Endothelial cell of umbilical vein (primary cell): ENCODE measurements at regions of chr10 and their contacts with region 1.

Region 1: DNA sequence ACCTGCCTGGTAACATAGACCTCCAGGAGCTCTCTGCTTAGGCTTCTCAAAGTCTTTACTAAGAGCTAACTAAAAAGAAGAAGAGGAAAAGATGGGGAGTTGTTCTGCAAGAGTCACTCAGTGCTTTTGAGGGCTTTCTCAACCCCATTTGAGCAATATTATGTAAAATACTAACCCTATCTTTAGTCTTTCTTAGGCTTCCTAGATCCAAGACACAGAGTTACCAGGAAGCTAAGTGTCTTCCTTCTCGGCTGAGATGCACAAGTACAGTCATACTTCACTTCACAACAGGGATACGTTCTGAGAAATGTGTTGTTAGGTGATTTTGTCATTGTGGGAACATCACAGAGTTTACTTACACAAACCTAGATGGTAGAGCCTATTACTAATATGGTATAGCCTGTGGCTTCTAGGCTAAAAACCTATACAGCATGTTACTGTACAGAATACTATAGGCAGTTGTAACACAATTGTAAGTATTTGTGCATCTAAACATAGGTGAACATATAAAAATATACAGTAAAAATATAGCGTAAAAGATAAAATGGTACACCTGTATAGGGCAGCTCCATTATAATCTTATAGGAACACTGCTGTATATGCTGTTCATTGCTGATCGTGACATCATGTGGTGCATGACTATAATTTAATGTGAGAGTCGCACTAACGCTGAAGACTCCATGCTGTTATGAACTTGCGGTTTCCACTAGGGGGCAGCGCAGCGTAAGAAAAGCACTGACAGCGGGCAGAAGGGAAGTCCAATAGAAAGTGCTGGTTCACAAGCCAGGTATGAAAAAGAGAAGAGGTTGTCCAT is 16.3 kb downstream of the ANKRD22 start:
- DNase-seq: peak; percentile 85
- H3K4me3 ChIP-seq: no peak overlapping the region
- H3K27ac ChIP-seq: no peak overlapping the region
- H3K4me1 ChIP-seq: no peaks in the 10 kb centered on the region
- H3K27me3 ChIP-seq: peaks cover 0 to 2% of the 10 kb centered on the region in 2 experiments
- CTCF ChIP-seq: peak; percentile 83 to 88
- POLR2A ChIP-seq: no peak

Region 2: DNA sequence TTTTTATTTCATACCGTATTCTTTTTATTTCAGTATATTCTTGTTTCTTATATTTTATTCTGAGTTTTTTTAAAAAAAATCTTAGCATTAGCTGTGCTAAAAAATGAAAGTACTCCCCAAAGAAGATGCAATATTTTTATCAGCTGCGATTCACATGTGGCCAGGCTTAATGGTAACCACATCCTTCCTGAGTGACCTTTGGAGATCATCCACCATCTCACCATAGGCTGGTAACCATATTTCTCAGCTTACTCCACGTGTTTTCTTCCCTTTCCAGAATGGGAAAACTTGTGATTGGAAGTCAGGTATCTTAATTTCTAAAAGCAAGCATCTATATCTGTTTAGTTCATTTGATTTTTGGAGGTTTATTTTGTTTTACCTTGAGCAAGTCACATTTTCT is 51.6 kb before region 1 on chr10:
- CTCF ChIA-PET with region 1: no interaction called
- POLR2A ChIA-PET with region 1: no interaction called
- dilution Hi-C with region 1: no loop called
- intact Hi-C with region 1: no loop called
- DNase-seq: no peak
- H3K4me3 ChIP-seq: no peak overlapping the region
- H3K27ac ChIP-seq: no peak overlapping the region
- H3K4me1 ChIP-seq: peaks cover 4% of the 10 kb centered on the region
- H3K27me3 ChIP-seq: no peaks in the 10 kb centered on the region
- CTCF ChIP-seq: no peak
- POLR2A ChIP-seq: no peak

Region 3: GRCh38 chr10:88851706-88852105 is 16.4 kb after region 1 on chr10 and contains the start of gene ANKRD22:
- CTCF ChIA-PET with region 1: interaction called, 22 read pairs
- POLR2A ChIA-PET with region 1: no interaction called
- dilution Hi-C with region 1: no loop called
- intact Hi-C with region 1: no loop called
- DNase-seq: no peak
- H3K4me3 ChIP-seq: no peak within 1 kb of the TSS
- H3K27ac ChIP-seq: no peak within 1 kb of the TSS
- H3K4me1 ChIP-seq: peaks cover 7% of the 10 kb centered on the region
- H3K27me3 ChIP-seq: peaks cover 0 to 7% of the 10 kb centered on the region in 2 experiments
- CTCF ChIP-seq: no peak
- POLR2A ChIP-seq: no peak
- total RNA-seq, gene ANKRD22: not detected in 2 replicates

Region 4: DNA sequence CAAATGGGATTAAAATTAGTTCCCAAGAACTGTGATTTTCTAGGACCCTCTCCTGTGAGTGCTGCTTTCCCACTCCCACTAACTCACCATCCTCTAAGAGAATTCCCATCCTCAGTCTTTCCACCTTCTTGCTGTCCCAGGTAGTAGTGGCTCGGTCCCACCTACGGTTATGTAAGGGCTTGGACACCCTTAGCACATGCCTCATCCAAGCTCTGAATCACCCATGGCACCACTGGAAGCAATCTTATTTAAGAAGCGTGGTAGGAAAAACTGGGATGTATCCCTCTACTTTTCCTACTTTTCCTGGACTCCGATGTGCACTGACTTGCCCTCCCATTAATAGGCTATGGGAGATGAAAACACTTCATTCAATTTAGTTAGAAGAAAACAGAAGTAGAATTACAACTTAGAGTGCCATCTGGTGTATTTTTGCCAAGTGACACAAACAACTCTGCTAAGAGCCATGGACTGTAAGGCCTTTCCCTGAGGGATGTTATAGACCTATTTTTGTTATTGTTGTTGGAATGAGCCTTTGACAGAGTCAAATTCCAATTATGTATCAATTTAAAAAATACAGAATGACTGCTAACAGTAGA is 30.1 kb after region 1 on chr10:
- CTCF ChIA-PET with region 1: interaction called, 22 read pairs
- POLR2A ChIA-PET with region 1: no interaction called
- dilution Hi-C with region 1: no loop called
- intact Hi-C with region 1: no loop called
- DNase-seq: no peak
- H3K4me3 ChIP-seq: no peak overlapping the region
- H3K27ac ChIP-seq: no peak overlapping the region
- H3K4me1 ChIP-seq: no peaks in the 10 kb centered on the region
- H3K27me3 ChIP-seq: peaks cover 14 to 25% of the 10 kb centered on the region in 2 experiments
- CTCF ChIP-seq: no peak
- POLR2A ChIP-seq: no peak

Region 5: DNA sequence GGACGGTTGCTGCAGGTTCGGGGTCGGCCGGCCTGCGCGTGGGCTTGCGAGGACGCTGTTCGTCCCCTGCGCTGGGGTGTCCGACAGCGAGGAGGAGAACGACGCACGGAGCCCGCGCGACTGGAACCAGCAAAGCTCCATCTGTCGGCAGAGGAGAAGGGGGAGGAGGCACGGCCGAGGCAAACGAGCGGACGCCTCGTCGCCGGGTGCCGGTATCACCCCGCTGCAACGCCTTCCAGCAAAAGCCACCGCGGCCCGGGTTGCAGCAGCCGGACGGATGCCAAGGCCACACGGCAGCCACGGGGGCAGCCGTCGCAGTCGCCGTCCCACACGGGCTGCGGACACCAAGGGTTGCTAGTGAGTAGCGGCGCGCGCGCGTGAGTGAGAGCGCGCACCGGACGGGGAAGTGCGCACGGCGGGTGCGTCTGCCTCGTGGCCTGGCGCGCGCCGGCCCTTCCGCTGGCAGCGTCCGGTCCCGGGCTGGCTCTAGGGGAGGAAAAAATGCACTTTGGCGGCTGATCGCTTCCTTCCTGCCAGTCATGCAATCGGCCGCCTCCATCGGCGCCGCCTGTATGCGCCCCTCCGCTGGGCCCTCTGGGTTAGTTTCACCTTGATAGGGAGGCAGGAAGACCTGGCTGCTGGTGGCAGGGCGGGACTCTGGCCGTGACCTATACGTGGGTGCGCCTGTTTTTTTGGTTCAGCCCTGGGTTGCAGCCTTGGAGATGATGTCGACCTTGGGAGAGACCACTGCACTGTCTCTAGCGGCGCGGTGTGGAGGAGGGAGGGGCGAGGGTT is 45.2 kb after region 1 on chr10:
- CTCF ChIA-PET with region 1: interaction called, 21 read pairs
- POLR2A ChIA-PET with region 1: no interaction called
- dilution Hi-C with region 1: no loop called
- intact Hi-C with region 1: loop called (anchors 1 kb)
- DNase-seq: peak; percentile 82
- H3K4me3 ChIP-seq: peak overlapping the region; percentile 30 to 55 (median 55)
- H3K27ac ChIP-seq: peak overlapping the region; percentile 84
- H3K4me1 ChIP-seq: peaks cover 30% of the 10 kb centered on the region
- H3K27me3 ChIP-seq: no peaks in the 10 kb centered on the region
- CTCF ChIP-seq: peak; percentile 5 to 28
- POLR2A ChIP-seq: peak; percentile 83

Region 6: GRCh38 chr10:88901206-88901983 is 66.1 kb after region 1 on chr10:
- CTCF ChIA-PET with region 1: interaction called, 13 read pairs
- POLR2A ChIA-PET with region 1: no interaction called
- dilution Hi-C with region 1: no loop called
- intact Hi-C with region 1: no loop called
- DNase-seq: no peak
- H3K4me3 ChIP-seq: no peak overlapping the region
- H3K27ac ChIP-seq: no peak overlapping the region
- H3K4me1 ChIP-seq: no peaks in the 10 kb centered on the region
- H3K27me3 ChIP-seq: no peaks in the 10 kb centered on the region
- CTCF ChIP-seq: no peak
- POLR2A ChIP-seq: no peak

Region 7: DNA sequence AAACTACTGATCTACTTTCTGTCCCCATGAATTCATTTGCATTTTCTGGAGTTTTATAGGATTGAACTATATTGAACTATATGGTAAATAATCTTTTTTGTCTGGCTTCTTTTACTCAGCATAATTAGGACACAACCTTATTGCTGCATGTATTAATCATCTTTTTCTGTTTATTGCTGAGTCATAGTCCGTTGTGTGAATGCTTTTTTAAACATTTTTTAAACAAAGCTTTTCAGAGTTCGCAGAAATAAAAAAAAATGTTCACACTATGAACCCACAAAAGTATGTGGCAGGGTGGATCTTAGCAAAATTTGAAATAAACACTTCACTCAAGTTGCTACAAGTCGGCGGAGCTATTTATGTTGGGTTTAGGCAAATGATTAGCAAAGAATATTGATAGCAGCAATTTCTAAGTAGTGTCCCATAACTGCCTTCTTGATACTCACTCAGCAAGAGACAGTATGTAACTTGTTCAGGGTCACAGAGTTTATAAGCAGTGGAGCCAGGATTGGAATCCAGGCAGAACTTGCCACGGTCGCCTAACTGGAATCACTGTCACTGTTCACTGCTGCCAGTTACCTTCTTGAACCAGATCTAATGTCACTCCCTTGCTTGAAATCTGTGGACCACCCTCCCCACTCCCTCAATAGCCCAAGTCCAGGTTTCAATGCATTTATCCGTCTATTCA is 366.2 kb after region 1 on chr10:
- CTCF ChIA-PET with region 1: no interaction called
- POLR2A ChIA-PET with region 1: no interaction called
- dilution Hi-C with region 1: no loop called
- intact Hi-C with region 1: no loop called
- DNase-seq: no peak
- H3K4me3 ChIP-seq: no peak overlapping the region
- H3K27ac ChIP-seq: no peak overlapping the region
- H3K4me1 ChIP-seq: peaks cover under 1% of the 10 kb centered on the region
- H3K27me3 ChIP-seq: peaks cover 15 to 23% of the 10 kb centered on the region in 2 experiments
- CTCF ChIP-seq: no peak
- POLR2A ChIP-seq: no peak